GM12878 (cell line): ENCODE measurements at regions of chr1 and their contacts with region 1.

Region 1: DNA sequence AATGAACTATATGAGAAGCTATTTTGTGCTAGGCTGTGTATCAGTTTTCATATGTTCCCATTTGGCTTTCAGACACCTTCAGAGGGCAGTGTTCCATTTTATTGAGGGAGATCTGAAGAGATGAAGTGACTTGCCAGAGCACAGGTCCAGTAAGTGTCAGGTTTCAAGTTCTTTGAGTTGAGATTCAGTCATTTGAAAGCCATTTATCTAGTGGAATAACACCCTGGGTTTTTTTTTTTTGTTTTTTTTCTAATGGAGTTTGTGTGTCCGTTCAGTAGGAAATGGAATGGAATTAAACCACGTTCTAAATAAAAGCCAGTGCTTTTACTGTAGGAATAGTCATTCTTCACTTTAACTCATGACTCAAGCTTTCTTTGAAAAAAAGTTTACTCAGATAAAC is 652.9 kb upstream of the USP24 start:
- DNase-seq: no peak
- ATAC-seq: no peak
- H3K4me3 ChIP-seq: no peak overlapping the region
- H3K27ac ChIP-seq: no peak overlapping the region
- H3K4me1 ChIP-seq: no peaks in the 10 kb centered on the region
- H3K27me3 ChIP-seq: no peaks in the 10 kb centered on the region; a peak in 1 of 4 replicates
- CTCF ChIP-seq: no peak; a peak in 1 of 6 replicates
- EP300 ChIP-seq: no peak
- POLR2A ChIP-seq: no peak
- RAD21 ChIP-seq: no peak

Region 2: GRCh38 chr1:55886856-55887712 is 19.1 kb after region 1 on chr1:
- CTCF ChIA-PET with region 1: interaction called, 10 read pairs
- POLR2A ChIA-PET with region 1: no interaction called
- RAD21 ChIA-PET with region 1: interaction called, 4 read pairs
- SMC1A ChIA-PET with region 1: interaction called, 15 read pairs
- in situ Hi-C with region 1: no loop called
- intact Hi-C with region 1: no loop called
- DNase-seq: no peak
- ATAC-seq: no peak
- H3K4me3 ChIP-seq: no peak overlapping the region
- H3K27ac ChIP-seq: no peak overlapping the region
- H3K4me1 ChIP-seq: no peaks in the 10 kb centered on the region
- H3K27me3 ChIP-seq: peaks cover 0 to 2% of the 10 kb centered on the region in 2 experiments; a peak in 1 of 4 replicates
- CTCF ChIP-seq: no peak
- EP300 ChIP-seq: no peak
- POLR2A ChIP-seq: no peak
- RAD21 ChIP-seq: no peak

Region 3: DNA sequence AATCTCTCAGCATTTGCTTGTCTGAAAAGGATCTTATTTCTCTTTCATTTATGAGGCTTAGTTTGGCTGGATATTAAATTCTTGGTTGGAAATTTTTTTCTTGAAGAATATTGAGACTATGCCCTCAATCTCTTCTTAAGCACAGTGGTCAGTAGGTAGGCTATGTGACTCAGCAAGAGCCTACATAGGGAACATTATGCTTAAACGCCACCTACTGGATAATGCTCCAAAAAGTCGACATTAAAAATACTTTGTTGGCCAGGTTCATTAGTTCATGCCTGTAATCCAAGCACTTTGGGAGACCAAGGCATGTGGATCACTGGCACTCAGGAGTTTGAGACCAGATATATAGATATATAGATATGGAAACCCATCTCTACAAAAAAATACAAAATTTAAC is 25.1 kb after region 1 on chr1:
- CTCF ChIA-PET with region 1: interaction called, 10 read pairs
- POLR2A ChIA-PET with region 1: no interaction called
- RAD21 ChIA-PET with region 1: interaction called, 3 read pairs
- SMC1A ChIA-PET with region 1: interaction called, 6 read pairs
- in situ Hi-C with region 1: no loop called
- intact Hi-C with region 1: no loop called
- DNase-seq: no peak
- ATAC-seq: peak; percentile 78
- H3K4me3 ChIP-seq: no peak overlapping the region
- H3K27ac ChIP-seq: no peak overlapping the region
- H3K4me1 ChIP-seq: no peaks in the 10 kb centered on the region
- H3K27me3 ChIP-seq: no peaks in the 10 kb centered on the region; a peak in 1 of 4 replicates
- CTCF ChIP-seq: peak; percentile 32 to 44 (median 36)
- EP300 ChIP-seq: no peak
- POLR2A ChIP-seq: no peak
- RAD21 ChIP-seq: peak; percentile 48; the same call in 1 of the 2 replicates

Region 4: GRCh38 chr1:55931081-55931940 is 63.3 kb after region 1 on chr1:
- CTCF ChIA-PET with region 1: no interaction called
- POLR2A ChIA-PET with region 1: no interaction called
- RAD21 ChIA-PET with region 1: no interaction called
- SMC1A ChIA-PET with region 1: no interaction called
- in situ Hi-C with region 1: no loop called
- intact Hi-C with region 1: no loop called
- DNase-seq: no peak
- ATAC-seq: no peak
- H3K4me3 ChIP-seq: no peak overlapping the region
- H3K27ac ChIP-seq: no peak overlapping the region
- H3K4me1 ChIP-seq: no peaks in the 10 kb centered on the region
- H3K27me3 ChIP-seq: no peaks in the 10 kb centered on the region
- CTCF ChIP-seq: no peak
- EP300 ChIP-seq: no peak
- POLR2A ChIP-seq: no peak
- RAD21 ChIP-seq: no peak

Region 5: GRCh38 chr1:55943721-55944435 is 75.9 kb after region 1 on chr1:
- CTCF ChIA-PET with region 1: no interaction called
- POLR2A ChIA-PET with region 1: no interaction called
- RAD21 ChIA-PET with region 1: no interaction called
- SMC1A ChIA-PET with region 1: no interaction called
- in situ Hi-C with region 1: no loop called
- intact Hi-C with region 1: no loop called
- DNase-seq: no peak
- ATAC-seq: no peak
- H3K4me3 ChIP-seq: no peak overlapping the region
- H3K27ac ChIP-seq: no peak overlapping the region
- H3K4me1 ChIP-seq: no peaks in the 10 kb centered on the region
- H3K27me3 ChIP-seq: no peaks in the 10 kb centered on the region
- CTCF ChIP-seq: no peak
- EP300 ChIP-seq: no peak
- POLR2A ChIP-seq: no peak
- RAD21 ChIP-seq: no peak